HAP-1 (cell line): ENCODE measurements at regions of chr9 and their contacts with region 1.

Region 1: DNA sequence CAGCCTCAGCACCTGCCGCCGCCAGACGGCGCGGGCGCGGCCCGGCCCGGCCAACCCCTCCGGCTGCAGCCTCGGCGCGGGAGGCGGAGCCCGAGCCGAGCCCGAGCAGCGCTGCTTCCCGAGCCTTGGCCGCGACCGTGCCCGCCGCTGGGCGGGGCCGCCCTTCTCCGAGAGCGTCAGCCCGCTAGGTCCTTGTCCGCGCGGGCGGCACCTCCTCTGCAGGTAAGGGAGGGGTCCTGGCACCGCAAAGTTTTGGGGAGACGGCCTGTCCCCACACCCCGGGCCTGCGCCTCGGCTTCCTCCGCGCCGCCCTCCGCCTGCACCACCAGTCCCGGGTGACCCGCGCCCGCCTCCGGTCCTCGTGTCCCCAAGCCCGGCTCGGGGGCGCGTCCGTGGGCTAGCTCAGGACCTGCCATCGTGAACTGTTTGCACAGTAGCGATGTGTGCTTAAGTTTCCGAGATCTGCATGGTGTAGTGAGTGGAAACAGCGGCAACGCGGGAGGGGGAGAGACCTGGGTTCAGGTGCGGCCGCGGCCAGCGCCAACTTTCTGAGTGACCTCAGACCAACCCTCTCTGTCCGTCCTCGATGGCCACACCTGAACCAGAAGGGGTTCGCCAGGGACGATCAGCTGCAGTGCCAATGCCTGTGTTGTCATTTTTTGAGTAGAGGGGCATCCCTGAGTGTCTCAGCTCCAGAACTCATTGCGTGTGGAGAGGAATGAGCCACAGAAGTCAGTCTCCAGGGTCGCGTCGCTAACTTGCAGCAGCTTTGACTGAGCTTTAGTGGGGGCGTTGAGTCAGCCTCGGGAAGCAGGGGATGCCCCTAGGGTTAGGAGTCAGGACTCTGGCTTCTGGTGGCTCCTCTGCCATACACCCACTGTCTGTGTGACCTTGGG is at the start of gene FRMPD1:
- DNase-seq: peak; percentile 73 to 82
- H3K4me3 ChIP-seq: peak within 1 kb of the TSS; percentile 42
- H3K4me1 ChIP-seq: peaks cover 5% of the 10 kb centered on the region; the same call in 1 of the 2 replicates
- H3K27me3 ChIP-seq: peaks cover 25% of the 10 kb centered on the region

Region 2: DNA sequence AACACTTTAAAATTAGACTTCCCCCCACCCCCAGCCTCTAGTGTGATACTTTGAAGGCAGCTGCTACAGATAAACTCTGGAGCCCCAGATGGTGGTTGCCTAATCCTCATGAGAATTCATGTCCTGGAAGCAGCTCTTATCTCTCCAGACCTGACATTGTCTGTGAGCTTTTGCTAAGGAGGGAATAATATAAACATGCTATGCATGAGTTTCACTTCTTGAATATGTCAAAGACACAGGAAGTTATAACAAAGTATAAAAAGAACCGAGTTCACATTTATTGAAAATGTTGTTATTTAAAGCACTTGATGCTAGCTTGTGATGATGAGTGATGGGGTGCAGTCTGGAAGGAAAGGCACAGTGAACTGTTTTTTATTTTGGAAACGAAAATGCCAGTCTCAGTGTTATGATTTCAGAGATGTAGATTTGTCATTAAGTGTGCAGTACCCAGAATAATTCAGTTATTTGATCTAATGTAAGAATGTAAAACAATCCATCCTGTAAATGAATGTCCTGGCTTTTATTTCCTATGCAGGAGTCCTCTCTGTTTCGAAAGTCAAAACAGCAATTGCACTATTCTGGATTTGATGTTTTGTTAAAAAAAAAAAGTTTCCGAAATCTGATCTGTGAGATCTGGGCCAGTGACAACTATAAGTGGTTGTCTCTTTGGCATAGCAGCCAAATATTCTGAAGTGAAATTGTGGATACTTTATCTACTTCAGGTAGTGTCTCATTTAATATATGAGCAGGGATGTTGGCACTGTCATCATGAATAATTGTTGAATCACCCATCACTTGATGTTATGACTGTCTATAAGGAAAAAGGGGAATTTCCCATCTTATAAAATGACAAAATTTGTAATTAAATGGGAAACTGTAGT is 453.7 kb before region 1 on chr9:
- in situ Hi-C with region 1: no loop called
- DNase-seq: peak in 1 of 2 experiments; percentile 24
- H3K4me3 ChIP-seq: no peak overlapping the region
- H3K4me1 ChIP-seq: peaks cover 41% of the 10 kb centered on the region
- H3K27me3 ChIP-seq: no peaks in the 10 kb centered on the region

Region 3: GRCh38 chr9:37700900-37701299 is 49.8 kb after region 1 on chr9:
- in situ Hi-C with region 1: loop called (anchors 5 kb)
- DNase-seq: no peak
- H3K4me3 ChIP-seq: no peak overlapping the region
- H3K4me1 ChIP-seq: no peaks in the 10 kb centered on the region
- H3K27me3 ChIP-seq: peaks cover 3% of the 10 kb centered on the region; the same call in 1 of the 2 replicates

Region 4: DNA sequence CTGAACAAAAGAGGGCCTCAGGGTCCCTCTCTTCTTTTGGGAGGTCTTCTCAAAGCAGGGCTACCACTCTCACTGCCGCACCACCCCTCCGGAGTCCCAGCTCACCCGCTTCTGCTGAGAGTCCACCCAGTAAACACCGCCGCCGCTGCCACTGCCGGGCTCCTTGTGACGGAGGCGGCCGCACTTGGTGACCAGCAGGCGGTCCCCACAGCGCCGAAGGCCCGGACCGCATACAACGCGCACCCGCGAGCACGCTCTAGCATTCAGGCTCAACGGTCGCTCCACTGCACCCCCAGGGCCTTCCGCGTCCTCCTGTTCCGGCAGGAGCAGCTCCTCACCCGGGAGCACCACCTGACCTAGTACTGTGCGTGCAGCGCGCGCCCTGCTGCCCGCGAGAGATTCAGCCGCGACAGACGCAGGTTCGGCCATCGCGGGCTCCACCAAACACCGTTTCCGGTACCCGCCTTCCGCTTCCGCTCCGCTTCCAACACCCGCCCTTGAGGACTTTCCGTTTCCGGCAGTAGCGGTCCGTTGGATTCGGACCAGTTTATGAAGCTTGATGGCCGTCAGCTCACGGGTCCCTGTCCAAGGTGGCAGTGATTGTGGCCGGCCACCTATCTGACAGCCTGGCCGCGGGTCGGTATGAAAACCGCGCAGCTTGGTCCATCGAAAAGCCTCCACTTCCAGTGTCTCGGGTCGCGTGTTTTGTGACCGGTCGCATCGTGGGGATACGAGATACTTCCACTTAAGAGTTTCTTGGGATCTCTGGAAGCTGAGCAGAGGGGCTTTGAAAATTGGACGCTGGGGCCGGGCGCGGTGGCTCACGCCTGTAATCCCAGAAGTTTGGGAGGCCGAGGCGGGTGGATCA is 133.7 kb after region 1 on chr9 and contains the start of gene EXOSC3:
- in situ Hi-C with region 1: no loop called
- DNase-seq: peak; percentile 89 to 93
- H3K4me3 ChIP-seq: peak within 1 kb of the TSS; percentile 98
- H3K4me1 ChIP-seq: peaks cover 13% of the 10 kb centered on the region
- H3K27me3 ChIP-seq: no peaks in the 10 kb centered on the region